Dorsolateral prefrontal cortex (tissue), 120 donors: ENCODE measurements at regions of chr15 and their contacts with region 1.

Region 1: DNA sequence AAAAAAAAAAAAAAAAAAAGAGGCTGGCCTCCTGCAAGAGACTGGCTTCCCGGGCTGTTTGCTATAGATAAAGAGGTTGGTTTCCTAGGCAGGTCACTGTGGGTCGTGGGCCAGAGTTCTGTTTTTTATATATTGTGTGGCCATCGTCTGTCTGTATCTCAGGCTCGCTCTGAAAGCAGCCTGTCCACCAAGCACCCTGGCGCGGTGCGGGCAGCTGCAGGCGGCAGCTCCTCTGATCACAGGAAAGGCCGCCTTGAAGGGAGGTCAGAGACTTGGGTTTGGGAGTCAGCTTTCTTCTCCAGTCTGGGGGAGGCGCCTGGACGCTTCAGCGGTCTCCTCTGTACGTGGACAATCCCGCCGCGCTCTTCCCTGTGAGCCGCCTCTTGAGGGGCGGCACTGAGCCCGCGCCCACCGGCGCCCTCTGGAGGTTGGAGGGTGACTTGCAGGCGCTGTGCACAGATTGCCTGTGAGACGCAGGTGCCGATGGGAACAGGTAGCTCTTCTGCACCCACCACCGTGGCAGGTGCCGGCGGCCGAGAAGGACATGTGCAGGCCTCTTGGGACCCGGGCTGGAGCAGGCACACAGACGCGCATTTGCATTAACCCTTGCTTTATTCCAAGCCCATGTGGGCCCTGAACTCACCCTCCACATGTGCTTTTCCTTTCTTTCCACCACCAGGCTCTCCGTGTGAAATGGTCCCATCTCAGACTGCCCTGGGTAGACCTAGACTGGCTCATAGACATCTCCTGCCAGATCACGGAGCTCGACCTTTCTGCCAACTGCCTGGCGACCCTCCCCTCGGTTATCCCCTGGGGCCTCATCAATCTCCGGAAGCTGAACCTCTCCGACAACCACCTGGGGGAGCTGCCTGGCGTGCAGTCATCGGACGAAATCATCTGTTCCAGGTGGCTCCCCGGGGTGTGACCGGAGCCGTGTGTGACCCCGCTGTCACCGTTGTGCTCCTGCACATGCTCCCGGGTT is 89.3 kb downstream of the LRRK1 start:
- DNase-seq: peak in 9 of 10 donors; percentile 54 to 82 (median 68)
- H3K4me3 ChIP-seq: peak overlapping the region; percentile 20 to 74 (median 50)
- H3K27ac ChIP-seq: peak overlapping the region in 2 of 59 donors; percentile 21 to 44
- H3K27me3 ChIP-seq: no peaks in the 10 kb centered on the region
- CTCF ChIP-seq: peak; percentile 67 to 98 (median 91)

Region 2: GRCh38 chr15:100341662-100342560 is 666.5 kb before region 1 on chr15 and contains the start of gene ADAMTS17:
- intact Hi-C with region 1: loop called in 1 of 2 experiments (anchors 5 kb)
- DNase-seq: peak; percentile 86 to 97 (median 96)
- H3K4me3 ChIP-seq: peak within 1 kb of the TSS; percentile 62 to 86 (median 77)
- H3K27ac ChIP-seq: peak within 1 kb of the TSS in 4 of 59 donors; percentile 7 to 61 (median 35)
- H3K27me3 ChIP-seq: peaks cover 0 to 4% (median 0%) of the 10 kb centered on the region in 45 donors
- CTCF ChIP-seq: peak; percentile 88 to 99 (median 97)
- total RNA-seq, gene ADAMTS17: 4.7 to 28.7 (median 11.1) TPM

Region 3: DNA sequence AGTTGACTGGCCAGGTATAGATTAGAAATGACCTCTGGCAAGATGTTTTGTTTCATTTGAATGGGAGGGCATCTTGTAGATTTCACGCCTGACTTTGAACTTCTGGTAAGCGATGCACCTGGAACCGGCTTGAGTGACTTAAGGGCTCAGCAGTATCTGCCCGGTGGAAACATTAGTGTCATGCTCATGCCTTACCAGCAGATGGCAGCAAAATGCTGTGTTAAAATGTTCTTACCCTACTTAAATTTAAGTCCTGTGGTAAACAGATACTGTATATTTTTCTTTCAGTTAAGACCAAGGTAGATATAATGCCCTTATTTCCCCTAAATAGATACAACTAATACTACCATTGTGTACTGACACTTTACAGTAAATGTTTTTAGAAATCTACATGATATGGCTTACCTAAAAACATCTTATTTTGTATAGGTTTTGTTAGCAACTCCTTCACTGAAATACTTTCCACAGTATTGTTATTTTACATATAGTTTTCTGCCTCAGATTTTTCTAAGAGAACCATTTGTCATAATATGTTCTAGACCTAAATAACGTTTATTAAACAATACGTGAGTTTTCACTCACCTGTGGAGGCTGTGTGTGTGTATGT is 380.6 kb before region 1 on chr15:
- intact Hi-C with region 1: loop called (anchors 1 to 2 kb)
- DNase-seq: peak in 9 of 10 donors; percentile 44 to 76 (median 58)
- H3K4me3 ChIP-seq: no peak overlapping the region
- H3K27ac ChIP-seq: no peak overlapping the region
- H3K27me3 ChIP-seq: no peaks in the 10 kb centered on the region
- CTCF ChIP-seq: peak; percentile 83 to 99 (median 95)

Region 4: DNA sequence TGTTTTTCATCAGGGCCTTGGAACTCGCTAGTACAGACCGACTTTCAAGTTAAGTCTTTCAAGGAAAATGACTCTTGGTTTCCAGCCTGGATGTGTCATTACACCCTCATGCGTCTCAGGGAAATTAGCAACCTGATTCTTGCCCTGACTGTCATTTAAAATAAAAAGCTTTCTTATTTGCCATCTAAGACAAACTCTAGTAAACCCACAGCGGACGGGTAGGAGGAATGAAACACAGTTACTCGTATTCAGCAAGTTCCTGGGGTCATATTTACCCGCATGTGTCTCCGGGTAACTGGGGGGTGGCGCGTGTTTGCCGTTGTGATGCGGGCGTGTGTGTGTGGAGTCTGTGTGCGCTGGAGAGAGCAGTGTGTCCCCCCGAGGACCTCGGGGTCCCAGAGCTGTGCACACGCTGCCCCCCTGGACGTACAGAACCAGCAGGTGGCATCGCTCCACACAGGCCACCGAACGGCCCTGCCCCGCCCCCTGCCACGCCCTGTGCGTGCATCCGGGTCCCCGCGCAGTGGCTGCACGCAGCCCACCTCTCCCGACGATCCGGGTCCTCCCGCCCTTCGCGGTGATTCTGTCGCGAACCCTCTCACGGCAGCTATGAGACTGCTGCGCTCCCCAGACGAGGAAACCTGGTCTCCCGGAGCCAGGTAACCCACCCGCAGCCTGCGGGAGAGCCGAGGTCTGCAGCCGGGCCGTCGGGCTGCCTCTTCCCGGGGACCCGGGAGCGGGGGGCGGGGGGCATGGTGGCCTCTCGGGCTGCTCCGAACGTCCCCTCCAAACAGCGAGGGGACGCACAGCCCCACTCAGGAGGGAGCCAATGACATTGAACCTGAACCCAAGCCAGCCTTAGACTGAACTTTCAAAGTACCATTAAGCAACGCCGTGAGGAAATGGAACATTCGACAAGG is 158.9 kb before region 1 on chr15:
- intact Hi-C with region 1: loop called in 1 of 2 experiments (anchors 10 kb)
- DNase-seq: peak in 7 of 10 donors; percentile 36 to 65 (median 47)
- H3K4me3 ChIP-seq: peak overlapping the region; percentile 20 to 77 (median 59)
- H3K27ac ChIP-seq: peak overlapping the region in 17 of 59 donors; percentile 6 to 77 (median 54)
- H3K27me3 ChIP-seq: peaks cover 0 to 19% (median 4%) of the 10 kb centered on the region in 45 donors
- CTCF ChIP-seq: peak in 53 of 56 donors; percentile 20 to 78 (median 50)

Region 5: DNA sequence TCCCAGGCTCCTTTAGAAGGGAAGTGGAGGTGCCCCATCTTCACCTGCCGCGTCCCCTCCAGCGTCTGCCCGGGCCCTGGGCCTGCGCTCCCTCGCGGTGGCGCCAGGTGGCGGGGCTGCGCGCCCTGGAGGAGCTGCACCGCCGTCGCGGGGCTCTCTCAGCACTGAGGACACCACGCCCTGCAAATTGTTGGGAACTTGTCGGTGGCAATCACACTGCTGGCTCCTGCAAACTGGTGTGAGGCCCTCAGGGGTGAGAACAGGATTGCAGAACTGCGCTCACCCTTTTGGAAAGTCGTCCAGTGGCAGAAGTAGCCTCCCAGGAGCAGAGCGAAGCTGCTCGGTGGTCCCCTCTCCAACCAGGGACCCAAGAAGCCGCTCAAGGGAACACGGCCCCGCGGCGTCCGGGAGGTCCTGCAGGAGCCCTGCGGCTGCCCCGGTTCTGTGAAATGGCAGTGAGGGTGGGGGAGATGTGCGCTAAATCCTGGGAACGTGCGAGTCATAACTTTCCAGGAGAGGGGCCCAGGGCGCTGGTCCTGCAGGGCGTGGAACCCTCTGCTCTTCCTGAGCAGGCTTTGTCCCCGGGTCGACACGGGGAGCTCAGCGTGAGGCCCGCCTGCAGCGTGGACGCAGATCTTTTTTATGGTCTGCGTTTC is 90.3 kb before region 1 on chr15:
- intact Hi-C with region 1: loop called (anchors 5 kb)
- DNase-seq: peak in 8 of 10 donors; percentile 46 to 80 (median 64)
- H3K4me3 ChIP-seq: peak overlapping the region; percentile 38 to 78 (median 62)
- H3K27ac ChIP-seq: peak overlapping the region in 54 of 59 donors; percentile 15 to 87 (median 74)
- H3K27me3 ChIP-seq: peaks cover 0 to 41% (median 18%) of the 10 kb centered on the region in 45 donors
- CTCF ChIP-seq: peak; percentile 32 to 84 (median 72)

Region 6: DNA sequence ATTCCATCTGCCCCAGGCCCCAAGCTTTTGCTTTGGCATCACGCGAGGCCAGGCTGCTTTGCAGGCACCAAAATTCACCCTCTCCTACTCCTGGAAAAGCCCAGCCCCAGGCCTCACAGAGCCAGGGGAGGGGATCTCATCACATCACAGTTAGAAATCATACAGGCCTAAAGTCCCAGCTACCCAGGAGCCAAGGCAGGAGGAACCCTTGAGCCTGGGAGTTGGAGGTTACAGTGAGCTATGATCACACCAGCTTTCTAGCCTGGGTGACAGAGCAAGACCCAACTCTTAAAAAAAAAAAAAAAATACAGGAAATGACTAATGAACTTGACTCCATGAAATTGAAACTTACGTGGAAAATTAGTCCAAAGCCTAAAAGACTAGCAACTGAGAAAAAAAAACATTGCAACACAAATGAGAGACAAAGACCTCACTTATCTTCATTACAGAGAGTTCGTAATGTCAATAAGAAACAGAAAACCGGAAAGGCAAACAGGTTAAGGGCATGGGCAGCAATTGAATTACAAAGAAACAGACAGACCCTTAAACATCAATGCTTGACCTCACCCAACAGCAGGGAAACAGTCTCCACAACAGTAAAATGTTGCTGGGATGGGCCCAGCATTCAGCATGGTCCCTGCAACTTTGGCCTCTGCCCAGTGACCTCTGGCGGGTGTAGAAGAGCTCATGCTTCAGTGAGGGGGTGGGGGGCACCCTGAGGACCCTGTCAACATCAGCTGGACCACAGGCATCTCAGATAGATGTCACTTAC is 62.2 kb after region 1 on chr15:
- intact Hi-C with region 1: no loop called
- DNase-seq: peak in 1 of 10 donors; percentile 13
- H3K4me3 ChIP-seq: no peak overlapping the region
- H3K27ac ChIP-seq: peak overlapping the region in 17 of 59 donors; percentile 1 to 61 (median 30)
- H3K27me3 ChIP-seq: no peaks in the 10 kb centered on the region
- CTCF ChIP-seq: no peak